Activated naive CD8-positive, alpha-beta T cell treated with anti-CD3 and anti-CD28 coated beads, Interleukin-2, amount 10 ng/mL, durations not matched to agents 7 days and 5 days (primary cell): ENCODE measurements at regions of chr2 and their contacts with region 1.

Region 1: DNA sequence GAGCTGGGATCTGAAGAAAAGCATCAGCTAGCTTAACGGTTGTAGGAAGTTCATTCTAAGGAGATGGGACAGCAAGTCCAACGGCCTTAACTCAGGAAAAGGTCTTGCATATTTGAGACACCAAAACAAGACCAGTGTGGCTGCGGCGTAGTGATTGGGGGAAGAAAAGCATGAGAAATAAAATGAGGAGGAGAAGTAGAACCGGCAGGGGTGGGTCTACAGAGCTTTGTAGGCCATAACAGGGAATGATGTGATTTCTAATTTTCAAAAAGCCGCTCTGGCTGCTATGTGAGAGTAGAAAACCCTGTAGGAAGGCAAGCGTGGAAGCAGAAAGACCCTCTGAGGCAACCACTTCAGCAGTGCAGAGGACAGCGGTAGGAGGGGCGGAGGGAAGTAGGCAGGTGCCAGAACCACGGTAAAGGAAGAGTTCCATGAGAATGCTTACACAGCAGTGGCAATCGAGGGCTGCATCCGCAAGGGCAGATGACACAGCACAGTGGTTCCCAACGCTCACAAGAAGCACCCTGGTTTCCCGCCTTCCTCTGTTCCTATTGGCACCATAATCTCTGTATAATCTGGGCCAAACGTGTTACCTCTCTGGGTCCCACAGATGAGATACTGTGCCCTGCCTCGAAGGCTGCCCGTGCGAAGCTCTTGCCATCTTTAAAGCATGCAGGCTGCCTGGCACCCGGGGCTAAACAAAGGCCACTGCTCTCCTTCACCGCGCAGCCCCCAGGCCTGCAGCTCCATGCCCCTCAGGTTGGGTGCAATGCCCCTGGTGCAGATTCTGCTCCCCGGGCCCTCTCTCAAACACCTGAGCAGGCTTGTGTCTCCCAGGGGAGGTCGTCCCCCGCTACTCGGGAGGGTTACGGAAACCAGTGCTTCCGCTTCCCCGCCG is 791 bp downstream of the ANKRD39 start:
- DNase-seq: no peak
- ATAC-seq: no peak
- H3K4me3 Mint-ChIP-seq: peak overlapping the region; percentile 93
- H3K27ac Mint-ChIP-seq: peak overlapping the region; percentile 89
- H3K4me1 Mint-ChIP-seq: peaks cover 29% of the 10 kb centered on the region
- H3K27me3 Mint-ChIP-seq: no peaks in the 10 kb centered on the region

Region 2: DNA sequence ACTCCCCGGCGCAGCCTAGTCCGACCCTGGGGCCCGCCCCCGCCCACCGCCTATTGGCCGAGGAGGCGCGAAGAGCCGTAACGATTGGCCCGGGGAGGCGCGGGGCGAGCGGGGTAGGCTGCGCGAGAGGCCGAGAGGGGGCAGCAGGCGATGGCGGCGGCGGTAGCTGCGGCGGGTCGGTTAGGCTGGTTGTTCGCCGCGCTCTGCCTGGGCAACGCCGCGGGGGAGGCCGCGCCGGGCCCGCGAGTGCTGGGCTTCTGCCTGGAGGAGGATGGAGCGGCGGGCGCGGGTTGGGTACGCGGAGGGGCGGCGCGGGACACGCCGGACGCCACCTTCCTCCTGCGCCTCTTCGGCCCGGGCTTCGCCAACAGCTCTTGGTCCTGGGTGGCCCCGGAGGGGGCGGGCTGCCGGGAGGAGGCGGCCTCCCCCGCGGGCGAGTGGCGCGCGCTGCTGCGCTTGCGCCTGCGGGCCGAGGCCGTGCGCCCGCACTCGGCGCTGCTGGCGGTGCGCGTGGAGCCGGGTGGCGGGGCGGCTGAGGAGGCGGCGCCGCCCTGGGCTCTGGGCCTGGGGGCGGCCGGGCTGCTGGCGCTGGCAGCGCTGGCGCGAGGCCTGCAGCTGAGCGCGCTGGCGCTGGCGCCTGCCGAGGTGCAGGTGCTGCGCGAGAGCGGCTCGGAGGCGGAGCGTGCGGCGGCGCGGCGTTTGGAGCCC is 40.7 kb before region 1 on chr2 and contains the start of gene CNNM3:
- POLR2A ChIA-PET with region 1: interaction called, 12 read pairs
- DNase-seq: peak; percentile 98
- ATAC-seq: peak; percentile 89
- H3K4me3 Mint-ChIP-seq: peak within 1 kb of the TSS; percentile 91
- H3K27ac Mint-ChIP-seq: peak within 1 kb of the TSS; percentile 78
- H3K4me1 Mint-ChIP-seq: peaks cover 42% of the 10 kb centered on the region
- H3K27me3 Mint-ChIP-seq: no peaks in the 10 kb centered on the region
- total RNA-seq, gene CNNM3: 34.6 to 34.7 TPM

Region 3: DNA sequence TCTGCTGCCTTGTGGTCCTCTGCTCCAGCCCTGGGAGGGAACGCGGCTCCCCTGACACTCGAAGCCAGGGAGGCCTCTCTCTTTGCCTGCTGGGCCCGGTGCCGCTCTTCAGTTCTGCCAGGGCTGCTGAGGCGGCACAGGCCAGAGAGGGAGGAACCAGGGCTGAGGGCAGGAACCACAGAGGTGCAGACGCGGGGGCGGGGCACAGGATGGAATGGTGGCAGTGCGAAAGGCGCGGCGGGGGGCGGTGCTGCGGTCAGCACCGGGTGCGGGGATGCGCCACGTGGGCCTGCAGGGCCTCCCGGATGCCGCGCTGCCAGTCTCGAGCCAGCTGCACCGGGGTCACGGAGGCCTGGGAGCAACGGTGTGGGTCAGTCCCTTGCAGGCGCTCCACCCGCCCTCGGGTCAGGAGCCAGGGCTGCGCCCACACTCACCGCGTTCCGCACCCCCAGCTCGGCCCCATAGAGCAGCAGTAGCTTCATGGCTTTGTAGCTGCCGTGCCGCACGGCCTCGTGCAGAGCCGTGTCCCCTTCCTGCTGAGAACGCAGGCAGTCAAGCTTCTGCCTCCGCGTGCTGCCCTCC is 17.6 kb before region 1 on chr2:
- POLR2A ChIA-PET with region 1: interaction called, 16 read pairs
- DNase-seq: peak; percentile 85
- ATAC-seq: peak; percentile 90
- H3K4me3 Mint-ChIP-seq: peak overlapping the region; percentile 39
- H3K27ac Mint-ChIP-seq: peak overlapping the region; percentile 83
- H3K4me1 Mint-ChIP-seq: peaks cover 20% of the 10 kb centered on the region
- H3K27me3 Mint-ChIP-seq: no peaks in the 10 kb centered on the region

Region 4: DNA sequence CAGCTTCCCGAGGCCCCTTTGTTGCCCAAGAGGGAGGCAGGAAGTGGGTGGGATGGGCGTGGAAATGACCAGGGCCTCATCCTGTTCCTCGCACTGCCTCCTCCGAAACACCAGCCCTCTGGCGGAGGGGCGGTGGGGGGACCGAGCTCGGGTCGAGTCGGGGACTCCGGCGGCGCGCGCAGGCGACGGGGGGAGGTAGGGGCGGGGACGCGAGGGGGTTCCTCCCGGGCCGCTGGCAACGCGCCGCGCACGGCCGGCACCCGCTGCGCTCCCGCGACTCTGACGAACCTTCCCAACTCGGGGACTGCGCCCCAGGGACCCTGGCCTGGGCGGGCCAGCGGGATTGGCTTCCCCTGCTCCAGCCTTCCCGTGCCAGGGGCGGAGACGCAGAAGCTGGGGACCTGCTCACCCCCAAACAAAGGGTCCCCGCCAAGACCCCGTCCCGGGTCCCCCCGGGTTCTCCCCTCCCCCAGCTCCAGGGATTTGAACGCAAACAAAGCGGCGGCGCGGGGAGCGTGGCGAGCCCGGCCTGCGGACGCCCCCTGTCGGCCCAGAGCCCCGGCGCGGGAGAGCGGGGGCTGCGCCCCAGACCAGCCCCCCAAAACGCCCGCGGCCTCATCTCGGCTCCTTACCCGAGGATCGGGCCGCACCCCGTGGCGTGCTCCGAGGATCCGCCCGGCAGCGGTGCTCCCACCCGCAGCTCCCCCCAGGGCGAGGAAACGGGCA is 11.7 kb after region 1 on chr2:
- POLR2A ChIA-PET with region 1: interaction called, 41 read pairs
- DNase-seq: peak; percentile 77
- ATAC-seq: peak; percentile 58
- H3K4me3 Mint-ChIP-seq: peak overlapping the region; percentile 85
- H3K27ac Mint-ChIP-seq: peak overlapping the region; percentile 81
- H3K4me1 Mint-ChIP-seq: peaks cover 29% of the 10 kb centered on the region
- H3K27me3 Mint-ChIP-seq: peaks cover 1% of the 10 kb centered on the region

Region 5: DNA sequence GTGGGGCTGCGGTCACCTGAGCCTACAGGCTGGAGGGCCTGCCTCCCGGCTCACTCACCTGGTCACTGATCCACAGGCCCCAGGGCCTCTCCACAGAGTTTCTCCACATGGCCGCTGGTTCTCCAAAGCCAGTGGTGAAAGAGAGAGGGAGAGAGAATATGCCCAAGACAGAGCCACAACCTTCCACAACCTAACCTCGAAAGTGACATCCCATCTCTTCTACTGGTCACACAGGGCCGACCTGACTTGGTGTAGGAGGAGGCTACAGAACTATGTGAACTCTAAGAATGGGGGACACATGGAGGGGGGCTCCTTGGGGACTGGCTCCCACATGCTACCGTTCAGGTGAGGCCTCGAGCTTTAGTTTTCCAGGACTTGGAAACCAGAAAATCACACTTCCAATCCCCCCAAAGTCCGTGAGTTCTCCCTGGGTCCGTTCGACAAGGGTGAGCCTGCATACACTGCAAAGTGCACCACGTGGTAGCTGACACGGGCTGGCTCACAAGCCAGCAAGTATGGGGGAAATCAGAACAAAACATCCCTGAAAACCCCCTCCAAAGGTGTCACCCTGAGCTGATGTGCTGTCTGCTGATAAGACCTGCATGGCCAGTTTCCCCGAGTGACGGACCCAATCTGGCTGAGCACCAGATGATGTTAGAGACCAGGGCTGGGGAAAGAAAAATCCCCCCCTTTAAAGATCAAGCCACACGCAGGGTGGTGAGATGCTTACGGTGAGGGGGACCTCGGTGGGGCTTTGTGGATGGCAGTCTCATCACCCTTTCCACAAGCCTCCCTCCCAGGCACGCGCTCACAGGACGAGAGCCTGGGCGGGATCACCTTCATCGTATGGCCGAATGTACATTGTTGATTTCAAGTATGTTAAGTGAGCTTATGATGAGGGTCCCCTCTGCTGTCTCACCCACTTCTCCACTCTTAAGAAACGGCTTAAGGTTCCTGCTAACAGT is 67.1 kb after region 1 on chr2:
- POLR2A ChIA-PET with region 1: interaction called, 23 read pairs
- DNase-seq: peak; percentile 60
- ATAC-seq: peak; percentile 66
- H3K4me3 Mint-ChIP-seq: peak overlapping the region; percentile 77
- H3K27ac Mint-ChIP-seq: peak overlapping the region; percentile 93
- H3K4me1 Mint-ChIP-seq: peaks cover 26% of the 10 kb centered on the region
- H3K27me3 Mint-ChIP-seq: peaks cover 2% of the 10 kb centered on the region

Region 6: GRCh38 chr2:96951093-96951654 is 94.1 kb after region 1 on chr2:
- POLR2A ChIA-PET with region 1: interaction called, 88 read pairs
- DNase-seq: peak; percentile 86
- ATAC-seq: peak; percentile 89
- H3K4me3 Mint-ChIP-seq: no peak overlapping the region
- H3K27ac Mint-ChIP-seq: peak overlapping the region; percentile 48
- H3K4me1 Mint-ChIP-seq: peaks cover 28% of the 10 kb centered on the region
- H3K27me3 Mint-ChIP-seq: peaks cover 5% of the 10 kb centered on the region

Region 7: DNA sequence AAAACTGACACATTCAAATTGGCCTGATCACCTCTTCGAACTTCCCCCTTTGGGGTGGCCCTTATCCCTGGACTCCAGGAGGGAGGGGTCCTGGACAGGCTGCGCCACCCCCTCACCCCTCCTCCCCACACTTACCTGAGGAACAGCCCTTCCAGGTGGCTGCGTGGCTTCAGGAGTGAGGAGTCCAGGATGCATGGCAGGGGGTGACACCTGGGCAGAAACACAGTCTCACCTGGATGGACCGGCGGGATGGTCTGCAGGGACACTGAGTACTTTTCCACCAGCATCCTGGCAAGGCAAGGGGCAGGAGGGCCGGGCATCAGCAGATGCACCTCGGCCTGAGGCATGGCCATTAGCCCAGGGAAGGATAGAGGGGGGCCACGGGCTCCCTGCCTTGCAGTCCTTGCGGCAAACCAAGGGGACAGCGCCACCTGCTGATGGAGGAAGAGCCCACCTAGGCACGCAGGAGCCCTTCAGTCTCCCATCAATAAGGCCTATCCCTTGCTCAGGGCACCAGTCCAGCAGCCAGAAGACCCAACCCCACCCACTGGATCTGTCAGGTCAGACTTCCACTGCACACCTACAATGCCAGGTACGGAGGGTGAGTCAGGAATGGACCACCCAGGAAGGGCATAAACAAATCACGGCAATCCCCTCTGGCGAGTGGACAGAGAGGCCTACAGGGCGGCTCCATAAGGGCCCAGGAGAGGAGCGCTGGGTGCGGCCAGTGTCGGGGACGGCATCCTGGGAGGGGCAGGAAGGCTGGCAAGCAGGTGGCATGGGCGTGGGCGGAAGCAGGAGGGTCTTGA is 103.3 kb after region 1 on chr2:
- POLR2A ChIA-PET with region 1: interaction called, 88 read pairs
- DNase-seq: peak; percentile 92
- ATAC-seq: peak; percentile 48
- H3K4me3 Mint-ChIP-seq: peak overlapping the region; percentile 79
- H3K27ac Mint-ChIP-seq: peak overlapping the region; percentile 98
- H3K4me1 Mint-ChIP-seq: peaks cover 57% of the 10 kb centered on the region
- H3K27me3 Mint-ChIP-seq: no peaks in the 10 kb centered on the region